ENCODE measurements at regions of chr12 and their contacts with region 1.

Region 1: GRCh38 chr12:56636675-56637540 is 6.8 kb upstream of the BAZ2A start:
- DNase-seq: peak; percentile 94
- H3K4me3 Mint-ChIP-seq: peak overlapping the region; percentile 94
- H3K27ac Mint-ChIP-seq: peak overlapping the region; percentile 97
- H3K4me1 Mint-ChIP-seq: peaks cover 64% of the 10 kb centered on the region
- H3K27me3 Mint-ChIP-seq: no peaks in the 10 kb centered on the region

Region 2: GRCh38 chr12:56448860-56449621 is 187.9 kb before region 1 on chr12 and contains the start of gene TIMELESS:
- CTCF ChIA-PET with region 1: no interaction called
- POLR2A ChIA-PET with region 1: no interaction called
- DNase-seq: peak; percentile 88
- H3K4me3 Mint-ChIP-seq: peak within 1 kb of the TSS; percentile 86
- H3K27ac Mint-ChIP-seq: peak within 1 kb of the TSS; percentile 89
- H3K4me1 Mint-ChIP-seq: peaks cover 37% of the 10 kb centered on the region
- H3K27me3 Mint-ChIP-seq: no peaks in the 10 kb centered on the region
- total RNA-seq, gene TIMELESS: 59.5 to 63.6 TPM

Region 3: DNA sequence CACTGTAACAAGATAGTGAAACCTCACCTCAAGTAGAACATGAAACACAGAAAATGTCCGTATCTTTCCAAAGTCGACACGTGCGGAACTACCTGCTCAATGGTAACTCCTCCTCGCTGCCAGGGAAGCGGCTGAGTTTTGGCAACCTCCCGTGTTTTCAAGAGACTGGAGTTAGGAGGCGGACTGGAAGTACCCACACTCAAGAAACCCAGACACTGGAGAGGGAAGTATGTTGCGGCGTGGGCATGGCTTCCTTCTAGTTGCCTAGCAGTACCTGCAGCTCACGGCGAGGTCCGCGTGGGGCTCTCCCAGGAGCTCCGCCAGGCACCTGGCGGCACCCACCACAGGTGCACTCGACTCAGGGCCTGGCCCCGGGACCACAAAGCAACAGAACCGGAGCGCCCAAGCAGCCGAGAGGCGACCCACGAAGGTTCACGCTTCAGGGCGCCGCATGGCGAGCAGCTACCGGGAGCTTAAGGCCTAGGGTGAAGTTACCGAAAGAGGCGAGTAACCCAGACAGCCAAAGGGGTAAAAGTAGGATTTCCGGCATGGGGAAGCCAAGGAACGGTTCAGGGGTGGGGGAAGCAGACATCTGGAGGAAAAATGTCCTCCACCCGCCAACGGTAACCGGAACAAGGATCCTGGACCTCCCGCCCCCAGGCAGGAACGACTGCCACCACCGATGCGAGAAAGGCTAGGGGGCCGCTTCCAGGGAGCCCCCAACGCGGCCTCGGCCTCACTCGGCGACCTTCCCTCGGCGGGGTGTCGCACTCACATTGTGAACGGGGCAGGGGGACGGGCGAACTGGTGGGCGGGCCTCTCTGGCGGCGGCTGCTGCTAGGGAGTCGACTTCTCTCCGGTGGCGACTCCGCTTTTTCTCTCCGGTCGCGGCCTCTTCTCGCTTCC is 50.6 kb after region 1 on chr12:
- CTCF ChIA-PET with region 1: interaction called, 27 read pairs
- POLR2A ChIA-PET with region 1: interaction called, 6 read pairs
- DNase-seq: peak; percentile 53
- H3K4me3 Mint-ChIP-seq: peak overlapping the region; percentile 100
- H3K27ac Mint-ChIP-seq: peak overlapping the region; percentile 100
- H3K4me1 Mint-ChIP-seq: peaks cover 33% of the 10 kb centered on the region
- H3K27me3 Mint-ChIP-seq: no peaks in the 10 kb centered on the region